Activated naive CD8-positive, alpha-beta T cell treated with anti-CD3 and anti-CD28 coated beads, Interleukin-2, amount 10 ng/mL, durations not matched to agents 7 days and 5 days (primary cell): ENCODE measurements at regions of chr1 and their contacts with region 1.

Region 1: DNA sequence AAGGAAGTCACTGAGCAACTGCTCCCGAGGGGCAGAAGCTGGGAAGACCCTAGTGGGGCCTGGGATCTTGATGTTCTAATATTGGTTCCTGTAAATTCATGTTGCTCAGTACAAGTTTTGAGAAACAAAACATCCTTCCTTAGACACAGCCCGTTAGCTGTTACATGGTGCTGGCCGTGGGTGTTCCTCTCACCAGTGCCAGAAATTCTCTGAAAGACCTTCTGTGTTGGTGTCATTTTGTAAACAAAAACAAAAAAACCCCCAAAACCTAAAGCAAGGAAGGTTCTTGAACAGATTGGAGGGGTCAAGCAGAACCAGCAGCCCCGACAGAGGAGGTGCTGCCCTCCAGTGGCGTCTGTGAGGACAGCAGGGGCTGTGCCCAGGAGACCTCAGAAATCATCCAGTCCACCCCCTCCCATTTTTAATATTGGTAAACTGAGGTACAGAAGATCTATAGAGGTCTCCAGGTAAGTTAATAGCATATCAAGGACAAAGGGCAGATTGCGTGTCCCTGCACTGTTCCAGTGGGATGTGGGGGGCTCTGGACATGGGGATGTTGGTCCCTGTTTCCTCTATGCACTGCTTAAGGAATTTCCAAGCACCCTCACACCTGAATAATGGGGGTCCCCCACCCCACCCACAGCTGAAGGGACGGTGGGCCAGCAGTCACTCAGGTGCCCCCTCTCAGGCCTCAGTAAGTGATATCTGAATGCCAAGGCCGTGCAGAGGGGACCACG is 38.2 kb downstream of the SLC2A7 start:
- DNase-seq: peak; percentile 85
- ATAC-seq: peak; percentile 53
- H3K4me3 Mint-ChIP-seq: peak overlapping the region; percentile 73
- H3K27ac Mint-ChIP-seq: peak overlapping the region; percentile 91
- H3K4me1 Mint-ChIP-seq: peaks cover 37% of the 10 kb centered on the region
- H3K27me3 Mint-ChIP-seq: peaks cover 2% of the 10 kb centered on the region

Region 2: DNA sequence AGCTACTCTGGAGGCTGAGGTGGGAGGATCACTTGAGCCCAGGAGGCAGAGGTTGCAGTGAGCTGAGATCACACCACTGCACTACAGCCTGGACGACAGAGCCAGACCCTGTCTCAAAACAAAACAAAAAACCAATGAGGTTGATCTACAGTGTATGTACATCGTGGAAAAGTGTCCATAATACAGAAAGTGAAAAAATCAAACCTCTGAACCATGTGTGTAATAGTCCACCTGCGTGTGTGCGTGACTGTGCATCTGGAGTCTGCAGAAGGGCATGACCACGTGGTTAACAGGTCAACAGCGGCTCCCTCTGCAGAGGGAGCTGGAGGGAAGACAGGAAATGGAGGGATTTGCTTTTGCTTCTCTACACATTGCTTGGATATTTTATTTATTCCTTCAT is 77.1 kb before region 1 on chr1:
- POLR2A ChIA-PET with region 1: interaction called, 11 read pairs
- DNase-seq: no peak
- ATAC-seq: no peak
- H3K4me3 Mint-ChIP-seq: no peak overlapping the region
- H3K27ac Mint-ChIP-seq: peak overlapping the region; percentile 79
- H3K4me1 Mint-ChIP-seq: peaks cover 47% of the 10 kb centered on the region
- H3K27me3 Mint-ChIP-seq: no peaks in the 10 kb centered on the region

Region 3: GRCh38 chr1:8941906-8942305 is 46.1 kb before region 1 on chr1:
- POLR2A ChIA-PET with region 1: interaction called, 28 read pairs
- DNase-seq: no peak
- ATAC-seq: no peak
- H3K4me3 Mint-ChIP-seq: peak overlapping the region; percentile 83
- H3K27ac Mint-ChIP-seq: peak overlapping the region; percentile 93
- H3K4me1 Mint-ChIP-seq: peaks cover 83% of the 10 kb centered on the region
- H3K27me3 Mint-ChIP-seq: no peaks in the 10 kb centered on the region

Region 4: DNA sequence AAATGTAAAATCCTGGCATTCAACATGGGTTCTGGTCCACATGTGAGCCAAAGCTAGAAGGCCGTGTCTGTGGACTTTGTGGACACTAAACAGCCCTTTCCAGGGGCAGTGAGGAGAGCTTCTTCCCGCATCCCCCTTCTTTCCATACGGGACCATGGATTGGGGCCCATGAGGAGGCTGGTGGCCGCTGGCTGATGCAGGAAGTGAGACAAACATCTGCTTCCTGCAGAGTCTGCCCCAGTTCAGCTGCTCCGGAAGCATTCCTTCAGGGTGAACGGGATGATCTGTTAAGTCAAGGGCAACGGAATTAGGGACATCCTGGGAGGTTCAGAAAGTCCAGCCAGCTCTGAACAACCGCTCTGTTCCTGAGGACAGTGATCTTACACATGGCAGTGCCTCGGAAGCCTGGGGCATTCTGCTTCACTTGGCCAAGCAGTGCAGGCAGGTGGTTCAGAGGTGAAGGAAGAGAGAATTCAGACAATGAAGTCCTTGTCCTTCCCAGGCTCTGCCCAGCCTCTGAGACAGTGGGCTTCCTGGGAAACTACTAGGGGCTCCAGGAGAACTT is 40.8 kb before region 1 on chr1:
- POLR2A ChIA-PET with region 1: interaction called, 28 read pairs
- DNase-seq: no peak
- ATAC-seq: peak; percentile 3
- H3K4me3 Mint-ChIP-seq: peak overlapping the region; percentile 83
- H3K27ac Mint-ChIP-seq: peak overlapping the region; percentile 93
- H3K4me1 Mint-ChIP-seq: peaks cover 78% of the 10 kb centered on the region
- H3K27me3 Mint-ChIP-seq: no peaks in the 10 kb centered on the region

Region 5: GRCh38 chr1:8962812-8963530 is 25.1 kb before region 1 on chr1:
- POLR2A ChIA-PET with region 1: interaction called, 298 read pairs
- DNase-seq: peak; percentile 71
- ATAC-seq: peak; percentile 53
- H3K4me3 Mint-ChIP-seq: peak overlapping the region; percentile 79
- H3K27ac Mint-ChIP-seq: peak overlapping the region; percentile 86
- H3K4me1 Mint-ChIP-seq: peaks cover 70% of the 10 kb centered on the region
- H3K27me3 Mint-ChIP-seq: no peaks in the 10 kb centered on the region

Region 6: GRCh38 chr1:8970870-8971337 is 17.1 kb before region 1 on chr1:
- POLR2A ChIA-PET with region 1: interaction called, 298 read pairs
- DNase-seq: peak; percentile 70
- ATAC-seq: peak; percentile 80
- H3K4me3 Mint-ChIP-seq: peak overlapping the region; percentile 97
- H3K27ac Mint-ChIP-seq: peak overlapping the region; percentile 100
- H3K4me1 Mint-ChIP-seq: peaks cover 37% of the 10 kb centered on the region
- H3K27me3 Mint-ChIP-seq: no peaks in the 10 kb centered on the region

Region 7: GRCh38 chr1:9004700-9005394 is 16.8 kb after region 1 on chr1:
- POLR2A ChIA-PET with region 1: interaction called, 15 read pairs
- DNase-seq: peak; percentile 94
- ATAC-seq: peak; percentile 76
- H3K4me3 Mint-ChIP-seq: peak overlapping the region; percentile 77
- H3K27ac Mint-ChIP-seq: peak overlapping the region; percentile 81
- H3K4me1 Mint-ChIP-seq: peaks cover 17% of the 10 kb centered on the region
- H3K27me3 Mint-ChIP-seq: peaks cover 3% of the 10 kb centered on the region

Region 8: DNA sequence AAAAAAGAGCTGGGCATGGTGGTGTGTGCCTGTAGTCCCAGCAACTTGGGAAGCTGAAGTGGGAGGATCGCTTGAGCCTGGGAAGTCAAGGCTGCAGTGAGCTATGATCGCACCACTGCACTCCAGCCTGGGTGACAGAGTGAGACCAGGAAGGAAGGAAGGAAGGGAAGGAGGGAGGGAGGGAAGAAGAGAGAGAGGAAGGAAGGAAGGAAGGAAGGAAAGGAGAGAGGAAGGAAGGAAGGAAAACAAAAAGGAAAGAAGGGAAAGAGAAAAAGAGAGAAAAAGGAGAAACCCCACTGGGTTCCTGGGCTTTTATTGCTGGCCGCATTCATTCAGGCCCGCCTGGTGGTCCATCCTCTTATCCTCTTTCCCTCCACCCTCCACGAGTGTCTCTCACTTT is 28.4 kb after region 1 on chr1:
- POLR2A ChIA-PET with region 1: no interaction called
- DNase-seq: no peak
- ATAC-seq: no peak
- H3K4me3 Mint-ChIP-seq: no peak overlapping the region
- H3K27ac Mint-ChIP-seq: no peak overlapping the region
- H3K4me1 Mint-ChIP-seq: peaks cover 3% of the 10 kb centered on the region
- H3K27me3 Mint-ChIP-seq: peaks cover 31% of the 10 kb centered on the region